ENCODE measurements at regions of chr6 and their contacts with region 1.

Region 1: DNA sequence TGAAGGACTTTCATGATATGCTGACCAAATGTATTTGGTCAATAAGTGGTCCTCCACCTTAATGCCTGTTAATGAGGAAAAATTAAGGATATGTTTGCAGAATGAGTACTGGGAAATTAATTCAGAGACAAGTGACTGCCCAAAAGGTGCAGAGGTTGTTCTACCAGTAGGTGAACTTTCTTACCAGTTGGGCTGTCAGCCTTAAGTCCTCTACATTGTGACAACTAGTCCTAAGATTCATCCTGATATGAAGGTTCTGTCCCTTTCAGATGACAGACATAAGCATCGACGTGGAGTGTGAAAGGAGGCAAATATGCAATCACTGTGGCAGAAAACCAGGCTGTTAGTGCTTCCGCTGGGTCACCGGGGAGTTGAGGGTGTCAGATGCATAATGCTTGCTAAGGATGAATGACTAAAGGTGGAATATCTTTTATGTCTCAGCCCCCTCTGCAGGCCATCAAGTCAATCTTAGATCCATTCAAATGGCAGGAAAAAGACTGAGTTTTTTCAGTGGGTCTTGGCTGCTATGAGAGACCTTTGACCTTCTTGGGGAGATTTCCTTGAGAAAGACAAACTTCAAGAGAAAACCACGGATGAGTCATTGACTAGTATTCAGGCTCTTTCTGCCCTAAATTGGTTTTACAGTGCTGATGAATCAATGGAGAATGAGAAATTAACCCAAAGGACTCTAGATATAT is 226.0 kb downstream of the TPBG start:
- DNase-seq: no peak
- H3K4me3 ChIP-seq: no peak overlapping the region
- H3K27ac ChIP-seq: no peak overlapping the region
- H3K4me1 ChIP-seq: peaks cover 0 to 7% (median 7%) of the 10 kb centered on the region in 4 donors
- H3K27me3 ChIP-seq: no peaks in the 10 kb centered on the region
- CTCF ChIP-seq: no peak
- EP300 ChIP-seq: no peak
- POLR2A ChIP-seq: no peak

Region 2: DNA sequence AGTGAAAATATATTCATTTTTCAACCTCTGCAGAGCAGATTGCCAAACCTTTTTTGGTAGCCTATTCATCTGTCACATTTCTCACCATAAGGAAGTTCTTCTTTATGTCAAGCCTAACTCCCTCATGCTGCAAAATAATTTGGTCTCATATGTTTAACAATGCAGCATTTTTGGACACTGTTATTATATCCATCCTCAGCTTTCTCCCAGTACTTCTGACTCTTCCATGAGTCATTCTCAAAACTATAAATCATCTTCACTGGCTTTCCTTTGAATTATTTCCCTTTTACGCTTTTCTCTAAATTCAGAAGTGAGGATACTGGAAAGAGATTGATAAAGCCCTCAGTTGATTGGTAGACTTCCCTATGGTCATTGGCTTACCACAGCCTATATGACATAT is 33.9 kb before region 1 on chr6:
- intact Hi-C with region 1: no loop called
- DNase-seq: no peak
- H3K4me3 ChIP-seq: no peak overlapping the region
- H3K27ac ChIP-seq: no peak overlapping the region
- H3K4me1 ChIP-seq: peaks cover 0 to 11% (median 5%) of the 10 kb centered on the region in 4 donors
- H3K27me3 ChIP-seq: no peaks in the 10 kb centered on the region
- CTCF ChIP-seq: no peak
- EP300 ChIP-seq: no peak
- POLR2A ChIP-seq: no peak

Region 3: GRCh38 chr6:82616386-82617028 is 26.8 kb after region 1 on chr6:
- intact Hi-C with region 1: loop called (anchors 2 kb)
- DNase-seq: no peak
- H3K4me3 ChIP-seq: no peak overlapping the region
- H3K27ac ChIP-seq: peak overlapping the region in 3 of 4 donors; percentile 38 to 63 (median 47)
- H3K4me1 ChIP-seq: peaks cover 0 to 47% (median 26%) of the 10 kb centered on the region in 4 donors
- H3K27me3 ChIP-seq: no peaks in the 10 kb centered on the region
- CTCF ChIP-seq: peak in 1 of 3 experiments; percentile 29
- EP300 ChIP-seq: no peak
- POLR2A ChIP-seq: no peak

Region 4: GRCh38 chr6:82629921-82630320 is 40.3 kb after region 1 on chr6:
- intact Hi-C with region 1: no loop called
- DNase-seq: no peak
- H3K4me3 ChIP-seq: no peak overlapping the region
- H3K27ac ChIP-seq: peak overlapping the region in 3 of 4 donors; percentile 7 to 40 (median 27)
- H3K4me1 ChIP-seq: peaks cover 0 to 22% (median 13%) of the 10 kb centered on the region in 4 donors
- H3K27me3 ChIP-seq: no peaks in the 10 kb centered on the region
- CTCF ChIP-seq: no peak
- EP300 ChIP-seq: no peak
- POLR2A ChIP-seq: no peak